ENCODE measurements at regions of chr10 and their contacts with region 1.

Region 1: DNA sequence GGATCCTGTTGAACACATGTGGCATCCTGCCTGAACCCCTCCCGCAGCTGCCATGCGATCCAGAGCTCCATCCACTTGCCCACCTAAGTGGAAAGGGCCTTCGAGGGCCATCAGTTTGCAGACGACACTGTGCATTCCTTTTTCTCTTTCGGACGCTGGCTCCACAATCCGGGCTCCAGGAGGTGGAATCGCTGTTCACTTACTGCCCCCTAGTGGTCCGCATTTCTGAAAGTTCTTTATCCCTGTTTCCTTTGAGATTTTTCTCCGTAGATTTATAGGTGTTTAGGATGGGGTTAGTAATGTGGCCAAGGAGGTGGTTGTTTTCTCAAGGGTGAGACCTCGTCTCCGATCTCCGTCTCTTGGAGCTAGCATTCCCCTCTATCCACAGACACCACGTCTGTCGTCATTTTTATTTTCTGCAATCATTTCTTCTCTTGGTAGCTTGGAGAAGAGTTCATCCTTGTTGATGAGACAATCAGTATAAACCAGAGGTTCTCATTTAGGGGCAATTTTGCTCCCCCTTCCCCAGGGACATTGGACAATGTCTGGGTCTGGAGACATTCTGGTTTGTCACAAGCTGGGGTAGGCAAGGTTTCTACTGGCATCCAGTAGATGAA is 204.6 kb downstream of the ARHGAP21 start:
- DNase-seq: peak; percentile 21
- H3K4me3 ChIP-seq: no peak overlapping the region
- H3K27ac ChIP-seq: no peak overlapping the region
- H3K27me3 ChIP-seq: no peaks in the 10 kb centered on the region
- CTCF ChIP-seq: peak; percentile 86

Region 2: DNA sequence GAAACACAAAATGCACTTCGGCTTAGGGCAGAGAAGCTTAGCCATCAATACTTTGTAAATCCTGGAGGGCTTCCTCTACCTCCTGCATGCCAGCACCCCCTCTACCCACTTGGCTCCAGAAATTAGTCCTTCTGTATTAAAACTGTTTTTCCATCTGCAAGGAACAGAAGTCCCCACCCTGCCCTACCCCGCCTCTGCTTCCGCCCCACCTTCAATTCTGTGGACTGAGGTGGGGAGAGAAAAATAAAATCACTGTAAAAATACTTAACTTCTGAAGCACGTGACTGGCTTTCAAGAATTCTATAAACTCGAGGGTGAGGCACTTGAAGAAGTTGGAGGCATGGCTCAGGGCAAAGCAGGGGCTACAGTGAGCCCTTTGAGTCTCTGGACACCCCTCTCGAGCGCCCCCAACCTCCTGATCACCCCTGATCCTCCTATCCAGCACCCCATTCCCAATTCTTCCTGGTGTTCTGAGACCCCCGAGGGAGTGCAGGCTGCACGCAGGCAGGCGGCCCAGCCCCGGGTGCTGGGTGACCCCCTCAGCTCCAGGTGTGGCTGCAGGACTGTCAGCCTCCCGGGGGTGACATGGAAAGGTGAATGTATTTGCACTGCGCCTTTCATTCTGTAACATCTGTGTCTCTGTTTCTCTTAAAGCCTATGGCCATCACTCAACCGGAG is 317.4 kb before region 1 on chr10:
- CTCF ChIA-PET with region 1: interaction called, 11 read pairs
- POLR2A ChIA-PET with region 1: no interaction called
- DNase-seq: no peak
- H3K4me3 ChIP-seq: no peak overlapping the region
- H3K27ac ChIP-seq: no peak overlapping the region
- H3K27me3 ChIP-seq: peaks cover 4% of the 10 kb centered on the region
- CTCF ChIP-seq: no peak

Region 3: DNA sequence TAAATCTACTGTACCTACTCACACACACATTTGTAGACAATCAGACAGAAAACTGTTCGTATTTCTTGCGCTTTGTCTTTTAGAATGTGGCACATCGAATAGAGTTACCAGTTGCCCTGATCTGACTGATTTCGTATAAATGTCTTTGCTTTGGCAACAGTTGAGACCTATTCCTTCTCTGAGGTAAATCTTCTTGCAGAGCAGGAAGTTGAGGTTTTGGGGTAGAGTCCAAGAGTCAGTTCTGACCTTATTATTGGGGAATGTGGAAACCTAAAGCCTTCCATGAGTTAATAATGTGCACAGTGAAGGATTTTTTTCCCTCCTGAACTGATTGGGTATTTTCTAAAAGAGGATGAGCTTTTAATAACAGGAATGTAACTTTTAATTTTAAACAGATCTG is 174.8 kb before region 1 on chr10:
- CTCF ChIA-PET with region 1: interaction called, 10 read pairs
- POLR2A ChIA-PET with region 1: no interaction called
- DNase-seq: peak; percentile 91
- H3K4me3 ChIP-seq: peak overlapping the region; percentile 8; the same call in 1 of the 2 replicates
- H3K27ac ChIP-seq: no peak overlapping the region
- H3K27me3 ChIP-seq: no peaks in the 10 kb centered on the region
- CTCF ChIP-seq: no peak

Region 4: GRCh38 chr10:24415455-24416125 is 103.5 kb before region 1 on chr10:
- CTCF ChIA-PET with region 1: interaction called, 14 read pairs
- POLR2A ChIA-PET with region 1: no interaction called
- DNase-seq: no peak
- H3K4me3 ChIP-seq: no peak overlapping the region
- H3K27ac ChIP-seq: no peak overlapping the region
- H3K27me3 ChIP-seq: peaks cover 2% of the 10 kb centered on the region
- CTCF ChIP-seq: no peak

Region 5: GRCh38 chr10:24503461-24504320 is 15.4 kb before region 1 on chr10:
- CTCF ChIA-PET with region 1: interaction called, 175 read pairs
- POLR2A ChIA-PET with region 1: no interaction called
- DNase-seq: peak; percentile 92
- H3K4me3 ChIP-seq: no peak overlapping the region
- H3K27ac ChIP-seq: peak overlapping the region; percentile 81
- H3K27me3 ChIP-seq: no peaks in the 10 kb centered on the region
- CTCF ChIP-seq: peak; percentile 76

Region 6: GRCh38 chr10:24533981-24534380 is 14.9 kb after region 1 on chr10:
- CTCF ChIA-PET with region 1: interaction called, 22 read pairs
- POLR2A ChIA-PET with region 1: no interaction called
- DNase-seq: no peak
- H3K4me3 ChIP-seq: no peak overlapping the region
- H3K27ac ChIP-seq: no peak overlapping the region
- H3K27me3 ChIP-seq: no peaks in the 10 kb centered on the region
- CTCF ChIP-seq: no peak

Region 7: GRCh38 chr10:24556750-24557742 is 38.0 kb after region 1 on chr10:
- CTCF ChIA-PET with region 1: interaction called, 23 read pairs
- POLR2A ChIA-PET with region 1: no interaction called
- DNase-seq: peak; percentile 59
- H3K4me3 ChIP-seq: no peak overlapping the region
- H3K27ac ChIP-seq: no peak overlapping the region
- H3K27me3 ChIP-seq: peaks cover 16% of the 10 kb centered on the region
- CTCF ChIP-seq: peak; percentile 77

Measured in AG04450 (cell line).